CD14-positive monocyte (primary cell): ENCODE measurements at regions of chrX and their contacts with region 1.

Region 1: GRCh38 chrX:107716816-107717700 is 58.5 kb downstream of the TSC22D3 start:
- DNase-seq: peak; percentile 84 to 91 (median 90)
- H3K4me3 ChIP-seq: peak overlapping the region; percentile 66 to 99 (median 94)
- H3K4me3 Mint-ChIP-seq: peak overlapping the region; percentile 93 to 96
- H3K27ac ChIP-seq: peak overlapping the region; percentile 53 to 95
- H3K27ac Mint-ChIP-seq: peak overlapping the region; percentile 89 to 99 (median 93)
- H3K4me1 ChIP-seq: peaks cover 60 to 62% of the 10 kb centered on the region in 2 donors
- H3K4me1 Mint-ChIP-seq: peaks cover 53% of the 10 kb centered on the region
- H3K27me3 ChIP-seq: no peaks in the 10 kb centered on the region
- H3K27me3 Mint-ChIP-seq: peaks cover 0 to 21% (median 2%) of the 10 kb centered on the region in 3 donors
- CTCF ChIP-seq: no peak

Region 2: GRCh38 chrX:107551546-107551945 is 165.5 kb before region 1 on chrX:
- intact Hi-C with region 1: no loop called
- DNase-seq: no peak
- H3K4me3 ChIP-seq: no peak overlapping the region
- H3K4me3 Mint-ChIP-seq: no peak overlapping the region
- H3K27ac ChIP-seq: no peak overlapping the region
- H3K27ac Mint-ChIP-seq: no peak overlapping the region
- H3K4me1 ChIP-seq: no peaks in the 10 kb centered on the region
- H3K4me1 Mint-ChIP-seq: no peaks in the 10 kb centered on the region
- H3K27me3 ChIP-seq: peaks cover 0 to 4% of the 10 kb centered on the region in 2 donors
- H3K27me3 Mint-ChIP-seq: peaks cover 0 to 6% (median 1%) of the 10 kb centered on the region in 3 donors
- CTCF ChIP-seq: no peak

Region 3: DNA sequence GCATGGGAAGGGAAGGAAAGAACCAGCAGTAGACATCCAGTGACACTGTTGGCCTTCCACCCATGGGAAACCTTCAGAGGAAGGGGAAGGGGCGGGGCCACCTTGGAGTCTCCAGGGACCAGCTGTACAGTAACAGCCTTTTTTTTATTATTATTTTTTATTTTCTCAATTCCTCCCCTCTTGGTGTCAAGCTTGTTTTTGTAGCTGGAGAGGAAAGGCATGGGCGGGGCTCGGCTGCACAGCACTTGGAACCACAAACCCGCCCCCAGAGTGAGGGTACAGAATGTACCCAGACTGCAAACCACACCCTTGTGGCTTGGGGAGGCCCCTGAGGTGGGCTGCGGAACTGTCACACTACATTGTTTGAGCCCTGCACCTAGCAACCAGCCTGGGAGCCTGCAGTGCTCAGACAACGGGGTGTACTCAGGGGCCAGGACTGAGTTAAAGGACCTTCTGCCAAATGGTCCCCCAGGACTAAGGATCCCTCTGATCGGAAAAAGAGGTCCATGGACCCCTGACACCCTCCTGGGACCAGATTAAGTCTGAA is 43.1 kb before region 1 on chrX:
- intact Hi-C with region 1: loop called (anchors 2 kb)
- DNase-seq: peak; percentile 88 to 90 (median 90)
- H3K4me3 ChIP-seq: peak overlapping the region in 2 of 3 experiments; percentile 3 to 75
- H3K4me3 Mint-ChIP-seq: peak overlapping the region; percentile 55 to 91
- H3K27ac ChIP-seq: peak overlapping the region; percentile 87 to 95
- H3K27ac Mint-ChIP-seq: peak overlapping the region; percentile 89 to 99 (median 97)
- H3K4me1 ChIP-seq: peaks cover 56 to 61% of the 10 kb centered on the region in 2 donors
- H3K4me1 Mint-ChIP-seq: peaks cover 54% of the 10 kb centered on the region
- H3K27me3 ChIP-seq: no peaks in the 10 kb centered on the region
- H3K27me3 Mint-ChIP-seq: peaks cover 0 to 8% (median 3%) of the 10 kb centered on the region in 3 donors
- CTCF ChIP-seq: no peak

Region 4: GRCh38 chrX:107894038-107894437 is 177.0 kb after region 1 on chrX:
- intact Hi-C with region 1: no loop called
- DNase-seq: peak; percentile 13 to 28 (median 24)
- H3K4me3 ChIP-seq: no peak overlapping the region
- H3K4me3 Mint-ChIP-seq: no peak overlapping the region
- H3K27ac ChIP-seq: no peak overlapping the region
- H3K27ac Mint-ChIP-seq: no peak overlapping the region
- H3K4me1 ChIP-seq: no peaks in the 10 kb centered on the region
- H3K4me1 Mint-ChIP-seq: no peaks in the 10 kb centered on the region
- H3K27me3 ChIP-seq: no peaks in the 10 kb centered on the region
- H3K27me3 Mint-ChIP-seq: peaks cover 1 to 9% (median 4%) of the 10 kb centered on the region in 3 donors
- CTCF ChIP-seq: peak; percentile 57